ENCODE measurements at regions of chr1 and their contacts with region 1.

Region 1: GRCh38 chr1:99685516-99686180 is 39.7 kb downstream of the PALMD start:
- DNase-seq: peak; percentile 36 to 79 (median 45)
- ATAC-seq: peak; percentile 98
- H3K4me3 ChIP-seq: no peak overlapping the region
- H3K27ac ChIP-seq: no peak overlapping the region; the same call in 2 of the 3 replicates
- H3K4me1 ChIP-seq: no peaks in the 10 kb centered on the region
- H3K27me3 ChIP-seq: no peaks in the 10 kb centered on the region
- CTCF ChIP-seq: peak; percentile 65 to 82 (median 70)
- EP300 ChIP-seq: no peak
- POLR2A ChIP-seq: no peak
- RAD21 ChIP-seq: peak; percentile 46 to 79

Region 2: DNA sequence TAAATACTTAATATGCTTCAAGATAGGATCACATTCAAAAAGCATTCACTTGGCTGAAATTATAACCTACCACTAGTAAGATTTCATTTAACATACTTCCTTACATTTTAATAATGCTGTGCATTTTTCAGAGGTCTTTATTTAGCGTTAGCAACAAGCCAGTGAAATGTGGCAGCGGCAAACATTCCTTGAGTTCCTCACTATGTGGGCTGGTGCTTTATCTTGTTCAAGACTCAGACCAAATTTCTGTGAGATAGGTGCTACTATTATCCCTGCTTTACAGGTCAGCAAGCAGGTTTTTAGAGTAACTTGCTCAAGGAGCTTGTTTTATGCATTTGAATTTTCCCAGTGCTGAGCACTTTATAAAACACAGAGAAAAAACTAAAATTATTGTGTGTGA is 288.6 kb before region 1 on chr1:
- CTCF ChIA-PET with region 1: no interaction called
- POLR2A ChIA-PET with region 1: no interaction called
- in situ Hi-C with region 1: no loop called
- intact Hi-C with region 1: loop called (anchors 10 kb)
- DNase-seq: no peak
- ATAC-seq: no peak
- H3K4me3 ChIP-seq: no peak overlapping the region
- H3K27ac ChIP-seq: no peak overlapping the region
- H3K4me1 ChIP-seq: no peaks in the 10 kb centered on the region
- H3K27me3 ChIP-seq: peaks cover 0 to 2% of the 10 kb centered on the region in 2 experiments; a peak in 1 of 5 replicates
- CTCF ChIP-seq: no peak
- EP300 ChIP-seq: no peak
- POLR2A ChIP-seq: no peak
- RAD21 ChIP-seq: no peak

Region 3: GRCh38 chr1:99476058-99476457 is 209.6 kb before region 1 on chr1:
- CTCF ChIA-PET with region 1: no interaction called
- POLR2A ChIA-PET with region 1: no interaction called
- in situ Hi-C with region 1: no loop called
- intact Hi-C with region 1: loop called (anchors 5 kb)
- DNase-seq: no peak
- ATAC-seq: no peak
- H3K4me3 ChIP-seq: no peak overlapping the region
- H3K27ac ChIP-seq: no peak overlapping the region
- H3K4me1 ChIP-seq: no peaks in the 10 kb centered on the region
- H3K27me3 ChIP-seq: peaks cover 0 to 5% of the 10 kb centered on the region in 2 experiments; a peak in 1 of 5 replicates
- CTCF ChIP-seq: no peak
- EP300 ChIP-seq: no peak
- POLR2A ChIP-seq: no peak
- RAD21 ChIP-seq: no peak

Region 4: DNA sequence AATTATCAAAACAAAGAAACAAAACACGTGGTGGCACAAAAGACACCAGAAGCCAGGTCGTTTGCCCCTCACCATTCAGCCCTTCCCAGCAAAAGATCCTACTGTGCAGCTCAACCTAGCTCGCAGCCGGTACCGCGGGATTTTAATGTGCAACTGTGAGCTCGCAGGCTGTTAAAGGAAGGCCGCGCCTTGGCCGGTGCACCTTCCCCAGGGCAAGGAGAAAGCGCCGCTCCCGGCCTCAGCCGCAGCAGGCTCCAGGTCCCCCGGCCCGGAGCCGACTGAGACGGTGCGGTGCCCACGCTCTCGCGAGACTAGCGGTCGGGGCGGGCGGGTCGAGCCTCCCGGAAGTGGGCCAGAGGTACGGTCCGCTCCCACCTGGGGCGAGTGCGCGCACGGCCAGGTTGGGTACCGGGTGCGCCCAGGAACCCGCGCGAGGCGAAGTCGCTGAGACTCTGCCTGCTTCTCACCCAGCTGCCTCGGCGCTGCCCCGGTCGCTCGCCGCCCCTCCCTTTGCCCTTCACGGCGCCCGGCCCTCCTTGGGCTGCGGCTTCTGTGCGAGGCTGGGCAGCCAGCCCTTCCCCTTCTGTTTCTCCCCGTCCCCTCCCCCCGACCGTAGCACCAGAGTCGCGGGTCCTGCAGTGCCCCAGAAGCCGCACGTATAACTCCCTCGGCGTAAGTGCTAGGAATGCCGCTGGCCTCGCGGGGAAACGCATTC is 164.3 kb after region 1 on chr1 and contains the start of gene AGL:
- CTCF ChIA-PET with region 1: no interaction called
- POLR2A ChIA-PET with region 1: no interaction called
- in situ Hi-C with region 1: no loop called
- intact Hi-C with region 1: no loop called
- DNase-seq: peak; percentile 90 to 95 (median 92)
- ATAC-seq: peak; percentile 97
- H3K4me3 ChIP-seq: peak within 1 kb of the TSS; percentile 92
- H3K27ac ChIP-seq: peak within 1 kb of the TSS; percentile 89
- H3K4me1 ChIP-seq: peaks cover 7 to 12% of the 10 kb centered on the region in 2 experiments; a peak in 4 of 5 replicates
- H3K27me3 ChIP-seq: no peaks in the 10 kb centered on the region
- CTCF ChIP-seq: no peak
- EP300 ChIP-seq: no peak
- POLR2A ChIP-seq: peak; percentile 91
- RAD21 ChIP-seq: no peak; a peak in 1 of 4 replicates
- polyA plus RNA-seq, gene AGL: 6.3 to 6.5 TPM

Measured in K562 (cell line).